PC-9 (cell line): ENCODE measurements at regions of chr18 and their contacts with region 1.

Region 1: DNA sequence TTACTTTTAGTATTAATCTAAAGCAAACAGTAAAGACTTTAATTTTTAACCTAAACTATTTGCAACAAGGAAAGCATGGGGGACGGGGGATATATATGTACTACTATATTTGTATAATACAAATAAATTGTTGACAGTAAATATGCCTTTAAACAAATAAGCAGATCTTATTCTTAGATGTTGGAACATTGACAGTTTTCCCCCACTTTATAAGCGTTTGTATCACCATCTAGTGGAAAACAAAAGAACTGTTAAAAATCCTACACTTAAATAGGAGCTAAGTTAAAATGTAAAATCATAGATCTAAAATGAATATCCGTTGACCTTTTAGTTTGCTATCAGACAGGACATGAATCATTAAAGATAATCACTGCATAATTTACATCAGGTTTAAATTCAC is 50.0 kb downstream of the RBBP8 start:
- DNase-seq: no peak
- H3K4me3 ChIP-seq: no peak overlapping the region
- H3K27ac ChIP-seq: no peak overlapping the region
- H3K4me1 ChIP-seq: peaks cover 8% of the 10 kb centered on the region
- H3K27me3 ChIP-seq: no peaks in the 10 kb centered on the region
- CTCF ChIP-seq: peak; percentile 62

Region 2: GRCh38 chr18:21914739-21915319 is 1068.3 kb before region 1 on chr18:
- CTCF ChIA-PET with region 1: no interaction called
- POLR2A ChIA-PET with region 1: no interaction called
- intact Hi-C with region 1: loop called (anchors 10 kb)
- DNase-seq: peak in 1 of 2 experiments; percentile 15
- H3K4me3 ChIP-seq: no peak overlapping the region
- H3K27ac ChIP-seq: no peak overlapping the region
- H3K4me1 ChIP-seq: no peaks in the 10 kb centered on the region
- H3K27me3 ChIP-seq: no peaks in the 10 kb centered on the region
- CTCF ChIP-seq: peak; percentile 78

Region 3: DNA sequence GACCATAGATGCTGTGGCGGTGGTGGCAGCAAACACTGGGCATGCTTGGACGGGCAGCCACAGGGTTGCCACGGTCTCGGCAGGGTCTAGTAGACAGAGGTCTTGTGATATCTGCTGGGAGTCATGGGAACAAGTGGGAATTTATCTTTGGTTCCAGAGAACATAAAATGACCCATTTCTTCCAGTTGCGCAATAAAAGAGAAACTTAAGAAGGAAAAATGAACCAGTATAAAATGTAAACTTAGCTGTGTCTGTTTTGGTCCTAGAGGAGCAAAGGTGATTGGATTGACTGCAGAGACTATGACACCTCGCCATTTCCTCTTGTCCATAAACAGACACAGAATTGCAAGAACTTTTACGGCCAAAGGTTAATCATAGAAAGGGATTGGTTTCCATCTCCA is 182.6 kb before region 1 on chr18:
- CTCF ChIA-PET with region 1: interaction called, 5 read pairs
- POLR2A ChIA-PET with region 1: no interaction called
- intact Hi-C with region 1: loop called (anchors 5 kb)
- DNase-seq: no peak
- H3K4me3 ChIP-seq: no peak overlapping the region
- H3K27ac ChIP-seq: no peak overlapping the region
- H3K4me1 ChIP-seq: no peaks in the 10 kb centered on the region
- H3K27me3 ChIP-seq: no peaks in the 10 kb centered on the region
- CTCF ChIP-seq: no peak

Region 4: GRCh38 chr18:22813648-22814328 is 169.4 kb before region 1 on chr18:
- CTCF ChIA-PET with region 1: interaction called, 6 read pairs
- POLR2A ChIA-PET with region 1: interaction called, 6 read pairs
- intact Hi-C with region 1: loop called (anchors 1 kb)
- DNase-seq: peak in 1 of 2 experiments; percentile 39
- H3K4me3 ChIP-seq: no peak overlapping the region
- H3K27ac ChIP-seq: no peak overlapping the region
- H3K4me1 ChIP-seq: 0 out of 2 replicates have a peak, but pooled peaks cover 5% of the 10 kb centered on the region
- H3K27me3 ChIP-seq: no peaks in the 10 kb centered on the region
- CTCF ChIP-seq: peak; percentile 72

Region 5: GRCh38 chr18:23088310-23088870 is 105.2 kb after region 1 on chr18:
- CTCF ChIA-PET with region 1: no interaction called
- POLR2A ChIA-PET with region 1: no interaction called
- intact Hi-C with region 1: no loop called
- DNase-seq: no peak
- H3K4me3 ChIP-seq: no peak overlapping the region
- H3K27ac ChIP-seq: no peak overlapping the region
- H3K4me1 ChIP-seq: no peaks in the 10 kb centered on the region
- H3K27me3 ChIP-seq: no peaks in the 10 kb centered on the region
- CTCF ChIP-seq: no peak

Region 6: DNA sequence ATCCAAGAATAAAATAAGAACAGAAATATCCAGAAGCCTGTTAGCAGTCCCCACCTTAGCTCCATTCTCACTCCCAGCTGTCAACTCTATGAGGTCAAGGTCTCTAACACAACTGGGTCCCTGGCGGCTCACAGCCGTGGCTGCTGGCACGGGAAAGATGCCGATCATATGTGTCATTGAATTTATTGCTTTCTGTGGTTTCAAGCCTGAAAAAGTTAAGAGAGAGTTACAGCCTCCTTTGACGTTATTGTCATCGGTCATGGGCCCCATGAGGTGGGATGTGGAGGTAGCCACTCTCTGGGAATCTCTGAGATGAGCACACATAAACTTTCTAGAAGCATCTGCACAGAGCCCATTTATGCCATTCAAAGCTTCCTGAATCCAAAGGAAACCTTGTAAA is 123.4 kb after region 1 on chr18:
- CTCF ChIA-PET with region 1: no interaction called
- POLR2A ChIA-PET with region 1: no interaction called
- intact Hi-C with region 1: no loop called
- DNase-seq: peak; percentile 79 to 91
- H3K4me3 ChIP-seq: no peak overlapping the region; the same call in 1 of the 2 replicates
- H3K27ac ChIP-seq: peak overlapping the region; percentile 91
- H3K4me1 ChIP-seq: peaks cover 66% of the 10 kb centered on the region
- H3K27me3 ChIP-seq: no peaks in the 10 kb centered on the region
- CTCF ChIP-seq: no peak